Activated CD4-positive, alpha-beta memory T cell treated with anti-CD3 and anti-CD28 coated beads for 36 hours (primary cell): ENCODE measurements at regions of chr22 and their contacts with region 1.

Region 1: GRCh38 chr22:30902496-30903357 is 65.8 kb downstream of the MORC2 start:
- DNase-seq: no peak
- H3K4me3 Mint-ChIP-seq: no peak overlapping the region
- H3K27ac Mint-ChIP-seq: no peak overlapping the region
- H3K4me1 Mint-ChIP-seq: no peaks in the 10 kb centered on the region
- H3K27me3 Mint-ChIP-seq: no peaks in the 10 kb centered on the region

Region 2: GRCh38 chr22:30890686-30891442 is 11.9 kb before region 1 on chr22:
- CTCF ChIA-PET with region 1: interaction called, 22 read pairs
- POLR2A ChIA-PET with region 1: interaction called, 3 read pairs
- intact Hi-C with region 1: no loop called
- DNase-seq: peak; percentile 43
- H3K4me3 Mint-ChIP-seq: no peak overlapping the region
- H3K27ac Mint-ChIP-seq: no peak overlapping the region
- H3K4me1 Mint-ChIP-seq: peaks cover 25% of the 10 kb centered on the region
- H3K27me3 Mint-ChIP-seq: no peaks in the 10 kb centered on the region